Activated T-helper 1 cell treated with anti-CD3 and anti-CD28 coated beads, Interleukin-12 subunit alpha, Interleukin-12 subunit beta, Interleukin-2, Interleukin-4 antibody, amounts not matched to agents 30 ng/mL and 10 ng/mL and 1 ng/mL, durations not matched to agents 14 hours and 24 hours and 36 hours (primary cell): ENCODE measurements at regions of chr5 and their contacts with region 1.

Region 1: GRCh38 chr5:151771259-151772028 is at the start of gene G3BP1:
- DNase-seq: peak; percentile 99
- H3K4me3 Mint-ChIP-seq: peak within 1 kb of the TSS; percentile 88
- H3K27ac Mint-ChIP-seq: peak within 1 kb of the TSS; percentile 67
- H3K4me1 Mint-ChIP-seq: peaks cover 37% of the 10 kb centered on the region
- H3K27me3 Mint-ChIP-seq: no peaks in the 10 kb centered on the region
- total RNA-seq, gene G3BP1: 340 and 348 TPM in 2 replicates

Region 2: GRCh38 chr5:150357326-150358260 is 1413.9 kb before region 1 on chr5 and contains the start of gene TCOF1:
- intact Hi-C with region 1: loop called (anchors 5 kb)
- DNase-seq: peak; percentile 97
- H3K4me3 Mint-ChIP-seq: peak within 1 kb of the TSS; percentile 93
- H3K27ac Mint-ChIP-seq: peak within 1 kb of the TSS; percentile 91
- H3K4me1 Mint-ChIP-seq: peaks cover 39% of the 10 kb centered on the region
- H3K27me3 Mint-ChIP-seq: no peaks in the 10 kb centered on the region
- total RNA-seq, gene TCOF1: 130 and 131 TPM in 2 replicates

Region 3: DNA sequence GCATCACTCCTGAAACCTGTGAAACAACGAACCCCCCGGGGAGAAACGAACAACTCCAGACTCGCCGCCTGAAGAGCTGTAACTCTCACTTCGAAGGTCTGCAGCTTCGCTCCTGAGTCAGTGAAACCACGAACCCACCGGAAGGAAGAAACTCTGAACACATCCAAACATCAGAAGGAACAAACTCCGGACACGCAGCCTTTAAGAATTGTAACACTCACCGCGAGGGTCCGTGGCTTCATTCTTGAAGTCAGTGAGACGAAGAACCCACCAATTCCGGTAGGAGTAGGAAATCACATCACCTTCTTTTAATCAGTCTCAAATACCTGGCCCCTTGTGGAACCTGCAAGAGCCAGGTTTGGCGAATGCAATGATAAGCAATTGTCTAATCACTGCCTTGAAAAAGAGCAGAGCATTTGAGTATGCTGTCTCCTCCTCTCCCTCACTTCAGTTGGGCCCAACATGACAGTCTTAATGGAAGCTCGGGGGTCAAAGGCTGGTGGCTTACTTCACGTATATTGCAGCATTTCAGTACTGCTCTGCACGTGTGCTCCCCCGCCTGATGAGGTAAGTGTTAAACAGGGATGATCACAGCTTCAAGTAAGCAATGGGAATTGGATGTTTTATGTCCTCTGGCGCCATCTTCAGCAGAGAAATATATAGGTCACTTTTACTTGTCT is 924.6 kb before region 1 on chr5:
- intact Hi-C with region 1: loop called (anchors 10 kb)
- DNase-seq: peak; percentile 54
- H3K4me3 Mint-ChIP-seq: peak overlapping the region; percentile 79
- H3K27ac Mint-ChIP-seq: peak overlapping the region; percentile 70
- H3K4me1 Mint-ChIP-seq: peaks cover 19% of the 10 kb centered on the region
- H3K27me3 Mint-ChIP-seq: no peaks in the 10 kb centered on the region

Region 4: GRCh38 chr5:151213800-151214613 is 557.4 kb before region 1 on chr5:
- intact Hi-C with region 1: loop called (anchors 1 kb)
- DNase-seq: peak; percentile 83
- H3K4me3 Mint-ChIP-seq: peak overlapping the region; percentile 87
- H3K27ac Mint-ChIP-seq: peak overlapping the region; percentile 93
- H3K4me1 Mint-ChIP-seq: peaks cover 81% of the 10 kb centered on the region
- H3K27me3 Mint-ChIP-seq: no peaks in the 10 kb centered on the region

Region 5: DNA sequence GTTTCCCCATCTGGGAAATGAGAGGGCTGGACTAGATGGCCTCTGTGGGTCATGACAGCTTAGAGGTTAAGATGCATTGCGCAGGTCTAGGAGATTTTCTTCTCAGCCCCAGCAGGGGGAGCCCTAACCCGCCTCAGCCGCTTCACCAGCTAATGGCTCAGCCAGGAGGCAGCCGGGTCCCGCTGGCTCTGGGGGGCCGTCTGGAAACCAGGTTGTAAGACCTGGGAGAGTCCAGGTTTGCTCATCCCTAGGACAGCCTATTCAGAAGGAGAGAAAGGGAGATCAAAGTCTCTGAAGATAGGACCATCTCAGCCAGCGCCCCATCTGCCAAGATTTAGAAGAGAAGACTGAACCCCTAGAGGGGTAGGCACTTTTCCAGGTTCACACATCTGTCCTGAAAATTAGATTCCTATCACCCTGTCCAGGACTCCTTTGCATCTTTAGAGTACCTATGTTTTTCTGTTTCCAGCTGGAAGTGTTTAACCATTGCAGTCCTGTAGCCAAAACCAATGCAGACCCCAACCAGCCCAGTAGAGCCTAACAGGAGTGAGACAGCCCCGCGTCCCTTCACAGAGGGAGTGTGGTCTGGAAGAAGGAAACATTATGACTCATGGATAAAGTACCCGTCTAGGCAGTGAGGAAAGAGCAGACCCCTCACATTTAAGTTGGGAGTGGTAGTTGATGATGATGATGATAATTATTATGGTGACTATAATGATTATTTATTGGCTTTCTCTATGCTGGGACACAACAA is 112.3 kb before region 1 on chr5:
- intact Hi-C with region 1: loop called (anchors 1 kb)
- DNase-seq: peak; percentile 68
- H3K4me3 Mint-ChIP-seq: no peak overlapping the region
- H3K27ac Mint-ChIP-seq: no peak overlapping the region
- H3K4me1 Mint-ChIP-seq: peaks cover 12% of the 10 kb centered on the region
- H3K27me3 Mint-ChIP-seq: peaks cover 12% of the 10 kb centered on the region

Region 6: GRCh38 chr5:151786468-151786867 is 15.0 kb after region 1 on chr5:
- intact Hi-C with region 1: loop called (anchors 2 kb)
- DNase-seq: no peak
- H3K4me3 Mint-ChIP-seq: no peak overlapping the region
- H3K27ac Mint-ChIP-seq: peak overlapping the region; percentile 7
- H3K4me1 Mint-ChIP-seq: peaks cover 27% of the 10 kb centered on the region
- H3K27me3 Mint-ChIP-seq: no peaks in the 10 kb centered on the region